ENCODE measurements at regions of chr20 and their contacts with region 1.

Region 1: GRCh38 chr20:5126512-5127203 is at the start of gene CDS2:
- DNase-seq: peak; percentile 97
- H3K4me3 ChIP-seq: peak within 1 kb of the TSS; percentile 80
- H3K27ac ChIP-seq: peak within 1 kb of the TSS; percentile 39
- H3K27me3 ChIP-seq: no peaks in the 10 kb centered on the region
- CTCF ChIP-seq: peak; percentile 49
- polyA plus RNA-seq, gene CDS2: 43.5 and 48.7 TPM in 2 replicates

Region 2: GRCh38 chr20:5146871-5147592 is 20.4 kb after region 1 on chr20:
- CTCF ChIA-PET with region 1: interaction called, 17 read pairs
- POLR2A ChIA-PET with region 1: no interaction called
- DNase-seq: no peak
- H3K4me3 ChIP-seq: no peak overlapping the region
- H3K27ac ChIP-seq: no peak overlapping the region
- H3K27me3 ChIP-seq: no peaks in the 10 kb centered on the region
- CTCF ChIP-seq: no peak

Region 3: DNA sequence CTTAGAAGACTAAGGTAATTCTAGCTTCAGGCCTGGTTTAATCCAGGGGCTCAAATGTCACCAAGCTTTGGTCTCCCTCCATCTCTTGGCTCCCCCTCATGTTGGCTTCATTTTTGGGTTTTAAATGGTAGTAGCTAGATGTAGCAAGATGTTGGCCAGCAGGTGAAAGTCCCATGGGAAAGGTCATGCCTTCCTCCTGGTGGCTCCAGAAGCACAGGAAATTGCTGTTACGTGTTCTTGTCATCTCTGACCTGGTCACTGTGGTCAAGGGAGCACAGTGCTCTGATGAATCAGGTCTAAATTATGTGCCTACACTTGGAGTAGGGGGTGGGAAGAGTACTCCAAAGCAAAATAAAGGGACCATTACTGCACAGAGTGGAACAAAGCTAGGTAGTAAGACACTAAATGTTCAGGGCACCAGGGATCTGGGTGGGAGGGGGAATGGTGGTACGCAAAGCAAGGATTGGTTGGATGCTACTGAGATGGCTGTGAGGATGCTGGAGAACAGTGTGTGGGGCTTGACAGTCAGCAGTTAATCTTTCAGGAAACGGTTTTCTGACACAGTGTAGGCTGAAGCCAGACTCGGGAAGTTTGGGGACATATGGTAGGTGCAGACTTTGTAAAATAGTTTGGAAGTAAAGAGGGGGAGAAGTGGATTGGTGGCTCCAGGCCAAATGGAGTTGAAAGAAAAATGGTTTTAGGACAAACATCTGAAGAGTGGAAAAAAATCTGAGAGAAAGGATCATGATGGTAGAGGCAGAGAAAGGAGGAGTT is 30.2 kb after region 1 on chr20:
- CTCF ChIA-PET with region 1: interaction called, 41 read pairs
- POLR2A ChIA-PET with region 1: interaction called, 5 read pairs
- DNase-seq: no peak
- H3K4me3 ChIP-seq: no peak overlapping the region
- H3K27ac ChIP-seq: no peak overlapping the region
- H3K27me3 ChIP-seq: no peaks in the 10 kb centered on the region
- CTCF ChIP-seq: no peak

Region 4: GRCh38 chr20:5168651-5169396 is 42.2 kb after region 1 on chr20:
- CTCF ChIA-PET with region 1: interaction called, 15 read pairs
- POLR2A ChIA-PET with region 1: no interaction called
- DNase-seq: no peak
- H3K4me3 ChIP-seq: no peak overlapping the region
- H3K27ac ChIP-seq: peak overlapping the region; percentile 52
- H3K27me3 ChIP-seq: no peaks in the 10 kb centered on the region
- CTCF ChIP-seq: no peak

Region 5: GRCh38 chr20:5181956-5182355 is 55.3 kb after region 1 on chr20:
- CTCF ChIA-PET with region 1: interaction called, 284 read pairs
- POLR2A ChIA-PET with region 1: no interaction called
- DNase-seq: peak; percentile 43
- H3K4me3 ChIP-seq: no peak overlapping the region
- H3K27ac ChIP-seq: no peak overlapping the region
- H3K27me3 ChIP-seq: no peaks in the 10 kb centered on the region
- CTCF ChIP-seq: no peak

Region 6: DNA sequence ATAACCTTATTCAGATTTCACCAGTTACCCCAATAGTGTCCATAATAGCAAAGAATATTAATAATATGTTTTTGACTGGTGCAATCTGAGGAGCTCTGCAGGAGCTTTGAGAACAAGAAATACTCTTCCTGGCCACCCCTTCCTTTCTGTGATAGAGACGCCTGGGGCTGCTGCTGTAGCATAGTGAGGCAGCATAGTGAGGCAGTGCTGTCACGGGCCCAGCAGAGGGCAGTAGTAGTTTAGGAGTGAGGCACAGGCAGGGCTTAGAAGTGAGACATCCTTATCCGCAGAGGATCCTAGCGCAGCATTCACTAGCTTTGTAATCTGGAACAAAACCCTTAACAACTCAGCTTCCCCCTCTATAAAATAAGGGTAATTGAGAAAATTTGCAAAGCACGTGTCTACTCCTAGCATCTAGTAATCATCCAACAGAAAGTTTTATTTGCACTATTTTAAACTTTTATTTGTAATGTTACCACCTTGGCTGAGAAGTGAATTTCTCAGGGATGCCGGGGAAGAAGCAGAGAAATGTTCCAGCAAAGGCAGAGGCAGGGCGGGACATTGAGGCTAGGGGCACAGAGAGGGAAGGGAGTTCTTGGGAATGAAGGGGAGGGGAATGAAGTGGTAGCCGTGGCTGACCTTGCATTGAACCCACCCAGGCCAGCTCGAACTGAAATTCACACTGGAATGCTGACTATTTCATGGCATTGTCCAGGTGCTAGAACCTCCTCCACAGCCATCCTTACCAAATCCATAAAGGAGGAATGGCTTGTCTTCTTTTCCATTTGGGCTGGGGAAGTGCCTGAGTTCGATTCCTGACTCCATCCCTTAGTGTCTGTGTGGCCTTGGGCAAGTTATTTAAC is 78.9 kb after region 1 on chr20:
- CTCF ChIA-PET with region 1: interaction called, 24 read pairs
- POLR2A ChIA-PET with region 1: interaction called, 4 read pairs
- DNase-seq: peak; percentile 47
- H3K4me3 ChIP-seq: no peak overlapping the region
- H3K27ac ChIP-seq: no peak overlapping the region
- H3K27me3 ChIP-seq: no peaks in the 10 kb centered on the region
- CTCF ChIP-seq: peak; percentile 97

Region 7: GRCh38 chr20:5222919-5223634 is 96.4 kb after region 1 on chr20:
- CTCF ChIA-PET with region 1: interaction called, 22 read pairs
- POLR2A ChIA-PET with region 1: no interaction called
- DNase-seq: peak; percentile 30
- H3K4me3 ChIP-seq: no peak overlapping the region
- H3K27ac ChIP-seq: no peak overlapping the region
- H3K27me3 ChIP-seq: no peaks in the 10 kb centered on the region
- CTCF ChIP-seq: peak; percentile 96

Region 8: DNA sequence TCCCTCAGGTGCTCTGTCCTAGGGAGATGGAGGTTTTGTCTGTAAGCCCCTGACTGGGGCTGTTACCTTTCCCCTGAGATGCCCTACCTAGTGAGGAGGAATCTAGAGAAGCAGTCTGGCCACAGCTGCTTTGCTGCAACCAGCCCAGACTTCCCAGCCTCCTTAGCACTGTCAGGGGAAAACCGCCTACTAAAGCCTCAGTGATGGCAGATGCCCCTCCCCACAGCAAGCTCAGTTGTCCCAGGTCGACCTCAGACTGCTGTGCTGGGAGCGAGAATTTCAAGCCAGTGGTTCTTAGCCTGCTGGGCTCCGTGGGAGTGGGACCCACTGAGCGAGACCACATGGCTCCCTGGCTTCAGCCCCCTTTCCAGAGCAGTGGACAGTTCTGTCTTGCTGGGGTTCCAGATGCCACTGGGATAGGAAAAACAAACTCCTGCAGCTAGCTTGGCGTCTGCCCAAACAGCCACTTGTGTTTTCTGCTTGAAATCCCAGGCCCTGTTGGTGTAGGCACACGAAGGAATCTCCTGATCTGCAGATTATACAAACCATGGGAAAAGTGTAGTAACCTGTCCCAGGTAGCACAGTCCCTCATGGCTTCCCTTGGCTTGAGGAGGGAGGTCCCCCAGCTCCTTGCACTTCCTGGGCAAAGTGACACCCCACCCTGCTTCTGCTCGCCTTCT is 336.5 kb after region 1 on chr20:
- CTCF ChIA-PET with region 1: no interaction called
- POLR2A ChIA-PET with region 1: no interaction called
- DNase-seq: no peak
- H3K4me3 ChIP-seq: no peak overlapping the region
- H3K27ac ChIP-seq: no peak overlapping the region
- H3K27me3 ChIP-seq: no peaks in the 10 kb centered on the region
- CTCF ChIP-seq: no peak